Colonic mucosa (tissue), 4 donors: ENCODE measurements at regions of chr10 and their contacts with region 1.

Region 1: GRCh38 chr10:32190890-32191491 is 134.8 kb upstream of the KIF5B start:
- DNase-seq: no peak
- H3K4me3 ChIP-seq: no peak overlapping the region
- H3K27ac ChIP-seq: no peak overlapping the region
- H3K4me1 ChIP-seq: no peaks in the 10 kb centered on the region
- H3K27me3 ChIP-seq: no peaks in the 10 kb centered on the region
- CTCF ChIP-seq: peak; percentile 63

Region 2: DNA sequence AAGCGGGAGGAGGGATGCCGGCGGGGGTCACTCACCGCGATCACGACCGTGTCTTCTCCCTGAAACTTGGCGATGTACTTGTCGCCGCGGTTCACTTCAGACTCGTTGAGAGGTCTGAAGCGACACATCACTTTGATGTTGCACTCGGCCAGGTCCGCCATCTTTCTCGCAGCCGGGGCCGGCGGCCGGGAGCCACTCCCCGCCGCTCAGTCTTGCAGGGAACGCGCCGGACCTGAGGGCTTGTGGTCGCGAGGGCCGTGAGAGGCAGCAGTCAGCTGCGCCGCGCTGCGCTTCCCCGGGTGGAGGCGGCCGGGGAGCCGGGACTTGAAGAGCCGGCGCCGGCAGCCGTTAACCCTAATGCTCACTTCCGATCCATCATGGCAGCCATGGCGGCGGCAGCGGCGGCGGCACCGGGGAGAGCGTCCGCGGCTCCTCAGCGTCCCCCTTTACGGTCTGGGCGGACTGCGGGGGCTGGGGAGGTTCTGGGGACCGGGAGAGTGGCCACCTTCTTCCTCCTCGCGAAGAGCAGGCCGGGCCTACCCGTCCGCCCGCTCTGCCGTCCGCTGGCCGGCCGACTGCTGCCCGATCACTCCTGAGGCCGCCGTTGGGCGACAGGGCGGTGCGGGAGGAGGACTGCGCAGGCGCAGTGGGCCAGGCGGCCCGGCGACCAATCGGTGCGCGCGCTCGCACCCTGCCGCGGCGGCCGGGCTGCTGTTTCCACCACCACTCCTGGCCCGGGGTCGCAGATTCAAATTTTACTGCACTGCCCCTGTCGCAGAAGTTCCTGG is 135.0 kb before region 1 on chr10 and contains the start of gene KIF5B:
- intact Hi-C with region 1: loop called (anchors 10 kb)
- DNase-seq: peak; percentile 88
- H3K4me3 ChIP-seq: peak within 1 kb of the TSS; percentile 91
- H3K27ac ChIP-seq: peak within 1 kb of the TSS; percentile 99
- H3K4me1 ChIP-seq: no peaks in the 10 kb centered on the region
- H3K27me3 ChIP-seq: no peaks in the 10 kb centered on the region
- CTCF ChIP-seq: no peak
- total RNA-seq, gene KIF5B: 119 to 153 TPM

Region 3: GRCh38 chr10:32346134-32346550 is 155.2 kb after region 1 on chr10:
- intact Hi-C with region 1: loop called (anchors 10 kb)
- DNase-seq: peak; percentile 96
- H3K4me3 ChIP-seq: peak overlapping the region; percentile 84
- H3K27ac ChIP-seq: peak overlapping the region; percentile 100
- H3K4me1 ChIP-seq: peaks cover 10% of the 10 kb centered on the region
- H3K27me3 ChIP-seq: no peaks in the 10 kb centered on the region
- CTCF ChIP-seq: peak; percentile 95